Activated T-helper 1 cell treated with anti-CD3 and anti-CD28 coated beads, Interleukin-12 subunit alpha, Interleukin-12 subunit beta, Interleukin-2, Interleukin-4 antibody, amounts not matched to agents 30 ng/mL and 10 ng/mL and 1 ng/mL, durations not matched to agents 14 hours and 24 hours and 36 hours (primary cell): ENCODE measurements at regions of chr18 and their contacts with region 1.

Region 1: DNA sequence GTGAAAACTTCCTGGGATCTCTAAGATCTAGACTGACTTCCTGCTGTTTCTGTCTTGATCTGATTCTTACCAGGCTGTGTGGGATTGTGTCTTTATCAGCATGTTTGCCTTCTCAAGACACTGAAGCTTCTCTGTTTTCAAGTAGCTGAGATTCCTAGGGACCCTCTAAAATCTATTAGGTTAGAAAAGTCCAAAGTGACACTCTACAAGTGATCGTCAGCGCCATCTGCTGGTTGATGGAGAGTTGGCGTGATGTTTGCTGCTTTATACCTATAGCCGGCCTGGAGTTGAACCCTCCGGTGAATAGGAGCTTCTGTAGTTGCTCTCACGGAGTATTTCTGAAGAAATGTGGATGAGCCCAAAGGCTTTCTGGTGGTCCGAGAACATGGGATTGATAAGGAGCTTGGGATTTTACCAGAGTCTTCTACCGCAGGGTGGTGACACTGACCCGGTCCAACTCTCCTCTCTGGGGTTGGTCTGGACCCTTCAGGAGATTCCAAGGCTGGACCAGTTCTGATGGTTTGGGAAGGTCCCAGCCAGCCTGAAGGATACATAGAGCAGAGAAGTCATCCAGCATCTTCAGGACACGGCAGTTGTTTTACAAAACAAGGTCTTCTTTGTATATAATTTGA is 96.0 kb upstream of the TTC39C start:
- DNase-seq: peak; percentile 54
- H3K4me3 Mint-ChIP-seq: no peak overlapping the region
- H3K27ac Mint-ChIP-seq: no peak overlapping the region
- H3K4me1 Mint-ChIP-seq: peaks cover 29% of the 10 kb centered on the region
- H3K27me3 Mint-ChIP-seq: peaks cover 26% of the 10 kb centered on the region

Region 2: GRCh38 chr18:23812546-23813440 is 105.7 kb before region 1 on chr18:
- intact Hi-C with region 1: loop called (anchors 1 kb)
- DNase-seq: no peak
- H3K4me3 Mint-ChIP-seq: no peak overlapping the region
- H3K27ac Mint-ChIP-seq: no peak overlapping the region
- H3K4me1 Mint-ChIP-seq: peaks cover 23% of the 10 kb centered on the region
- H3K27me3 Mint-ChIP-seq: peaks cover 23% of the 10 kb centered on the region

Region 3: GRCh38 chr18:23828426-23828825 is 90.1 kb before region 1 on chr18:
- intact Hi-C with region 1: loop called (anchors 2 kb)
- DNase-seq: peak; percentile 49
- H3K4me3 Mint-ChIP-seq: no peak overlapping the region
- H3K27ac Mint-ChIP-seq: peak overlapping the region; percentile 89
- H3K4me1 Mint-ChIP-seq: peaks cover 52% of the 10 kb centered on the region
- H3K27me3 Mint-ChIP-seq: peaks cover 4% of the 10 kb centered on the region